ENCODE measurements at regions of chr6 and their contacts with region 1.

Region 1: GRCh38 chr6:10722820-10723566 is at the start of gene TMEM14C:
- DNase-seq: peak in 1 of 2 donors; percentile 98
- H3K4me3 ChIP-seq: peak within 1 kb of the TSS; percentile 74 to 82
- H3K27ac ChIP-seq: peak within 1 kb of the TSS; percentile 85
- H3K4me1 ChIP-seq: peaks cover 50% of the 10 kb centered on the region
- H3K27me3 ChIP-seq: no peaks in the 10 kb centered on the region
- CTCF ChIP-seq: no peak
- POLR2A ChIP-seq: peak in 1 of 2 donors; percentile 69
- total RNA-seq, gene TMEM14C: 95.8 TPM

Region 2: DNA sequence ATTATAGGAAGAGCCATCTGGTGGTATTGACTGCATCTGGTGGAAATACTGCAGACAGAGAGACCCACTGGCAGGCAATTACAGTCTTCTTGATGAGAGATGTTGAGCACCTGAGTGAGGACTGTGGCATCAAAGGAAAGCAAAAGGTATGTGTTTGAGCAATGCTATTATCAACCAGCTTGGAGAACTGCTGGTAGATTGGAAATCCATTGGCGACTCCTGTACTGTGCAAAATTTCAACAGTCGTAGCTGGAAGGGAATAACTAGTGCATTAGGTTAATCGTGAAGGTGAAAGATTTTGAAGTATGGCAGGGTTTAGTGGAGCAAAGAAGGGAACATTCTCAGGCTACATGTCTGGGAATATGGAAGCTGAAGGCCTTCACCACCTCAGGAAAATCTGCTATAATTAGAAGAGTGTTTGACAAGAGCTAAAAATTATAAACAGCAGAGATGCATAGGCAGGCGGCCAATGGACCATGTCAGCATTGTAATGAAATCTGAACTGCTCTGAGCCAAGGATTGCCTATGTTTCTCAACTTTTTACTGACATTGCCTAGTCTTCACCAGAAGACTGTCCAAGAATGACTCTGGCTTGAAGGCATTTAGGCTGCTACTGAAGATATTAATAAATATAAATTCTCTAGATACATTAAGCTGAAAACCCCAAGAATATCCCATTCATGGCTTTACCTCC is 112.9 kb before region 1 on chr6:
- intact Hi-C with region 1: no loop called
- DNase-seq: no peak
- H3K4me3 ChIP-seq: no peak overlapping the region
- H3K27ac ChIP-seq: no peak overlapping the region
- H3K4me1 ChIP-seq: no peaks in the 10 kb centered on the region
- H3K27me3 ChIP-seq: no peaks in the 10 kb centered on the region
- CTCF ChIP-seq: no peak
- POLR2A ChIP-seq: no peak

Region 3: GRCh38 chr6:10747251-10747972 is 24.4 kb after region 1 on chr6 and contains the start of gene TMEM14B:
- intact Hi-C with region 1: loop called (anchors 2 kb)
- DNase-seq: peak in 1 of 2 donors; percentile 97
- H3K4me3 ChIP-seq: peak within 1 kb of the TSS; percentile 71 to 73
- H3K27ac ChIP-seq: peak within 1 kb of the TSS; percentile 65
- H3K4me1 ChIP-seq: peaks cover 31% of the 10 kb centered on the region
- H3K27me3 ChIP-seq: no peaks in the 10 kb centered on the region
- CTCF ChIP-seq: no peak
- POLR2A ChIP-seq: peak in 1 of 2 donors; percentile 33
- total RNA-seq, gene TMEM14B: 40.5 TPM

Region 4: GRCh38 chr6:10759312-10759839 is 36.4 kb after region 1 on chr6:
- intact Hi-C with region 1: no loop called
- DNase-seq: no peak
- H3K4me3 ChIP-seq: no peak overlapping the region
- H3K27ac ChIP-seq: no peak overlapping the region
- H3K4me1 ChIP-seq: no peaks in the 10 kb centered on the region
- H3K27me3 ChIP-seq: no peaks in the 10 kb centered on the region
- CTCF ChIP-seq: peak in 1 of 3 experiments; percentile 15
- POLR2A ChIP-seq: no peak

Measured in vagina (tissue), 2 donors.